Activated B cell treated with CpG ODN at 0.5 μM for 24 hours (primary cell): ENCODE measurements at regions of chr1 and their contacts with region 1.

Region 1: DNA sequence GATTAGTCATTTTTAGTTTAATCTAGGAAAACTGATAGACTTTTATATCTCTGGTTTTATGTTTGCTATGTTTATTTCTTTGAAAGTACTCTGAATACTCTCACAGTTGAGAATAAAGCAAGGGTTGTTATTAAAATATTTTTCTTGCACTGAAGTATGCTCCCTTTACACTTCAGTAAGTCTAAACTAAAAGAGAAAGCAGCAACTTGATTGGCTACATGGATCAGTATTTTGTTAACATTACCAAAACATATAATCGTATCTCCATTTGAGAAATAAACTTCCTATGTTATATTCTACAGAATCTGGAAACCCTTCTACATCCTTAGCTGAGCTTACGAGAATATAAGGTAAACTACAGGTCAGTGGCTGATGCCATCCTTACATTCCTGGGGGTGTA is 149.5 kb upstream of the HP1BP3 start:
- DNase-seq: no peak
- ATAC-seq: no peak
- H3K4me3 Mint-ChIP-seq: no peak overlapping the region
- H3K27ac Mint-ChIP-seq: no peak overlapping the region
- H3K4me1 Mint-ChIP-seq: peaks cover 17% of the 10 kb centered on the region
- H3K27me3 Mint-ChIP-seq: no peaks in the 10 kb centered on the region
- CTCF ChIP-seq: no peak

Region 2: DNA sequence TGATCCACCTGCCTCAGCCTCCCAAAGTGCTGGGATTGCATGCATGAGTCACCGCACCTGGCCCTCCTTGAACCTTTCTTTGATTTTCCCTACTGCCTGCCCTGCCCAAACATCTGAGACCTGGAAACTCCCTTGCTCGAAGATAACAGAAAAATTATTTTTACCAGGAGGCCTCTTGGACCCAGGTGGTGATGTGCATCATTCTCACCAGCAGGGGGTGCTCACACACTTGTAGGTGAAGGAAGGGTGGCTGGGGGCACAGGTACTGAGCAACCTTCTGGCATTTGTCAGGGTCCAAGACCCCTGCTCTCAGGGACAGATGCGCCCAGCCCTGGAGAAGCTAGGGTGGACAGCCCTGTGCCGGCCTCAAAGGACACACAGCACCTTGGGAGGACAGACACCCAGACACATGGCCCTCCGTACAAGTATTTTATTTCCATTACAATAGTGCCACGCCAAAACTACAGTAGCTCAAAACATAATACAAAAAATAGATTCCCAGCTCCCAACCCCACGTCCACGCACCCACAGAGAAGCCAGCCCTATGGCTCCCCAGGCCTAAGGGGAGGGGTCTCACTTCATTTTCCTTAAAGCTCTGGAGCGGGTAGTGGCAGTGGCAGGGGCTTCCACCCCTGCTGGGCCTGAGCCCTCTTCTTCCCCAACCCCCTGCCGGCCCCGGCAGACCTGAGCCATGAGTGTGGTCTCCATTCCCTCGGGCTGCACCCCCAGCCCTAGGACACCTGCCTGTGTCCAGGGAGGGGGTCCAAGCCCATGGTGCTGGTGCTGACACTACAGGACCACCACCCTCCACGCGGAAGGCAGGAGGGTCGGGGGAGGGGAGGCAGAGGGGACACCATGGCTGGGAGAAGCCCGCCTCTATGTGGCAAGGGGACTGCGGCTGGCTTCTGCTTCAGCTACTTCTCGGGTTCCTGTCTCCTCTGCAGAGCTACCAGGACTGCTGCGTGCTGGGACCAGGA is 280.5 kb after region 1 on chr1:
- CTCF ChIA-PET with region 1: no interaction called
- POLR2A ChIA-PET with region 1: interaction called, 12 read pairs
- intact Hi-C with region 1: no loop called
- DNase-seq: peak; percentile 45
- ATAC-seq: peak; percentile 76
- H3K4me3 Mint-ChIP-seq: no peak overlapping the region
- H3K27ac Mint-ChIP-seq: peak overlapping the region; percentile 53
- H3K4me1 Mint-ChIP-seq: peaks cover 4% of the 10 kb centered on the region
- H3K27me3 Mint-ChIP-seq: no peaks in the 10 kb centered on the region
- CTCF ChIP-seq: peak; percentile 15